ENCODE measurements at regions of chrX and their contacts with region 1.

Region 1: GRCh38 chrX:129637217-129638109 is 17.3 kb downstream of the APLN start:
- DNase-seq: peak; percentile 91
- H3K4me3 ChIP-seq: no peak overlapping the region
- H3K27ac ChIP-seq: no peak overlapping the region
- H3K4me1 ChIP-seq: peaks cover 0 to 8% (median 5%) of the 10 kb centered on the region in 6 donors
- H3K27me3 ChIP-seq: no peaks in the 10 kb centered on the region
- CTCF ChIP-seq: peak; percentile 65 to 97 (median 90)
- POLR2A ChIP-seq: no peak

Region 2: GRCh38 chrX:129726307-129727111 is 89.0 kb after region 1 on chrX:
- intact Hi-C with region 1: loop called (anchors 10 kb)
- DNase-seq: no peak
- H3K4me3 ChIP-seq: no peak overlapping the region
- H3K27ac ChIP-seq: no peak overlapping the region
- H3K4me1 ChIP-seq: peaks cover 0 to 7% (median 0%) of the 10 kb centered on the region in 6 donors
- H3K27me3 ChIP-seq: no peaks in the 10 kb centered on the region
- CTCF ChIP-seq: peak in 10 of 11 experiments; percentile 26 to 69 (median 56)
- POLR2A ChIP-seq: no peak

Region 3: DNA sequence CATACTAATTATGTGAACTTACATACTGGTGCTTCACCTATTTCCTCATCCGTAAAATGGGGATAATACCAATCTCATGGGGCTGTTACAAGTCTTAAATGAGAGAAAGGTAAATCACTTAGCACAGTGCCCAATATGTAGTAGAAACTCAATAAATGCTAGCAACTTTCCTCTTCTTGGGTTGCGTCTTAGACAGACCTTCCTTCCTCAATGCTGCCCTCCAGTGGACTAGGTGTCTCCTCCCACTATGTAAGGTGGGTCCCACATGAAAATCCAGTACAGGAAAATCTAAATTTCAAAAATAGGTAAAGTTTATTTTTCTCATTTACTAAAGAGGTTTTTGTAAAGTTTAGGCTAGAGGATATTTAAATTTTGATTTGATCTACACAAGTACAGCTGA is 185.7 kb after region 1 on chrX:
- intact Hi-C with region 1: loop called (anchors 10 kb)
- DNase-seq: no peak
- H3K4me3 ChIP-seq: no peak overlapping the region
- H3K27ac ChIP-seq: peak overlapping the region in 2 of 8 donors; percentile 44 to 68
- H3K4me1 ChIP-seq: peaks cover 0 to 19% (median 0%) of the 10 kb centered on the region in 6 donors
- H3K27me3 ChIP-seq: no peaks in the 10 kb centered on the region
- CTCF ChIP-seq: peak; percentile 40 to 73 (median 66)
- POLR2A ChIP-seq: no peak

Measured in spleen (tissue), 13 donors.